ENCODE measurements at regions of chr6 and their contacts with region 1.

Region 1: DNA sequence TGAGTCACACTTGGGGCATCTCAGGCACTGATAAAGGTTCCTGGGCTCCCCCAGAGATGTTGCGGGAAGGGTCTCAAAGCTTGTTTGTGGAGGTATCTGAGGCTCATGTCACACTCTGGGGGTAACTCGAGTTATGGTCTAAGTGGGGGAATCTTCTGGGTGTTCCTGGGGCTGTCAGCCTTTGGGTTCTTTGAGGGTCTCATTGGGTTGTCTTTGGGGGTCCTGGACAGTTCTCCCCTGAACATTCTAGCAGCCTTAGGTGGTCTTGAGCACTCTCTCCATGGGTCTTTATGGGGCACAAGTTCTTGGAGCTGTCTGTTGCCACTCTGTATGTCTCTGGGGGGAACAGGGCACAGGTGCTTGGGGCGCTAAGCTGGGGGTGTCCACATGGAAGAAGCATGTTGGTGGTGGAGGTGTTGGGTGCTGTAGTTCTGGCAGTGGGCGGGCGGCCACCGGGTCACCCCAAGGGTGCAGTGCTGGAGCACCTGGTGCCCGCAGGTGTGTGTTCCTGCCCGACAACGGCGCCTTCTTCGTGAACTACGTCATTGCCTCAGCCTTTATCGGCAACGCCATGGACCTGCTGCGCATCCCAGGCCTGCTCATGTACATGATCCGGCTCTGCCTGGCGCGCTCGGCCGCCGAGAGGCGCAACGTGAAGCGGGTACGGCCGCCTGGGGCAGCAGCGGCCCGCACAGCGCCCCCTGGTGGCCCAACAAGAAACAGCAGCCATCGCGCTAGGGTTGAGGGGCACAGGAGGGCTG is 7.1 kb upstream of the CAPN11 start:
- DNase-seq: peak; percentile 42 to 97 (median 76)

Region 2: DNA sequence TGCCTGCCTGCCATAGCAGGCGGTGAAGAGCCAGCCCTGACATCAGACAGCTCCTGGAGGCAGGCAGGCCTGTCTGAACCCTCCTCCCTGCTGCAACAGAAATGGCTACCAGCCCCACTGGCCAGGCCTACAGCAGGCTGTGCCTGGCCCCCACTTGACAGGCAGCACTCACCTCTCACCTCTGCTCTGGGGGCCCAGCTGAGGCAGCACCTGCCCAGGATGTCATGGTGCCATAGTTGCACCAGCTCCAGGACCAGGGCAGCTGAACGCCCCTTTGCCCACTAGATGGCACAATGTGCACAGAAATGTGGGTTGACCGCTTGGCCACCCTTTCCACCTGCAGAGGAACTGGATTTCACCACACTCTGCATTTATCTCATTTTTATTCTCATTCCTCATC is 54.9 kb before region 1 on chr6:
- intact Hi-C with region 1: loop called (anchors 1 kb)
- DNase-seq: peak; percentile 63 to 96 (median 78)

Region 3: DNA sequence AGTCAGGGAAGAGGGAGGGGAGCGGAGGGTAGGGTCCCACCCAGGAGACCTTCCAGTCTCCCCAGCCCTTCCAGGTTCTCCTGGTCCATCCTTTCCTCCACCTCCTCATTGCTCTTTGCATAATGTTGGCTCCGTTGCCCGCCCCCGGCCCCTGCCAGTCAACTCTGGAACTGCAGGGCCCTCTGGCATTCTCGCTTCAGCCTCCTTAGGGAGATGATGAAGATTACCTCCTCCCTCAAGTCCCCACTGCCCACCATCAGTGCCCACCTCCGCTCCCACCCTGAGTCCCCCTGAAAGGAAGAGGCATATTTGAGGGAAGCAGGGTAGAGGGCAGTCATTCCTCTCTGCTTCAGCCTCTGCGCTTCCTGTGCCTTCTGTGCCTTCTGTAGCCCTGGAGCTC is 15.7 kb before region 1 on chr6:
- intact Hi-C with region 1: no loop called
- DNase-seq: no peak